Aorta (tissue), 5 donors: ENCODE measurements at regions of chr4 and their contacts with region 1.

Region 1: DNA sequence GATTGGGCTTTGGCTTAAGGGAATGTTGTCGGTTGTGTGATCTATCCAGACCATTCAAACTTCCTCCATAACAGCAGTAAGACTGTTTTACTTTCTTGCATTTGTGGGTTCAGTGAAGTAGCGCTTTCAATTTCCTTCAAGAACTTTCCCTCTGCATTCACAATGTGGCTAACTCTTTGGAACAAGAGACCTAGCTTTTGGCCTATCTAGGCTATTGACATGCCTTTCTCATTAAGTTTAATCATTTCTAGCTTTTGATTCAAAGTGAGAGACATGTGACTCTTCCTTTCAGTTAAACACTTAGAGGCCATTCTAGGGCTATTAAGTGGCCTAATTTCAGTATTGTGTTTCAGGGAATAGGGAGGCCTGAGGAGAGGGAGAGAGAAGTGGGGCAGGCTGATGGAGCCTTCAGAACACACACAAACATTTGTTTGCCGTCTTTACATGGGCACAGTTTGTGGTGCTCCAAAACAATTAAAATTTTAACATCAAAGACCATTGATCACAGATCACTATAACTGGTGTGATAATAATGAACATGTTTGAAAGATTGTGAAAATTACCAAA is 34.1 kb downstream of the ADH5 start:
- DNase-seq: no peak
- ATAC-seq: no peak
- H3K4me3 ChIP-seq: no peak overlapping the region
- H3K27ac ChIP-seq: no peak overlapping the region
- H3K4me1 ChIP-seq: no peaks in the 10 kb centered on the region
- H3K27me3 ChIP-seq: no peaks in the 10 kb centered on the region

Region 2: GRCh38 chr4:98467627-98468072 is 586.9 kb before region 1 on chr4:
- intact Hi-C with region 1: loop called (anchors 2 to 10 kb)
- DNase-seq: peak in 1 of 2 donors; percentile 81
- ATAC-seq: peak; percentile 90
- H3K4me3 ChIP-seq: no peak overlapping the region
- H3K27ac ChIP-seq: no peak overlapping the region
- H3K4me1 ChIP-seq: no peaks in the 10 kb centered on the region
- H3K27me3 ChIP-seq: peaks cover 0 to 2% of the 10 kb centered on the region in 2 donors

Region 3: GRCh38 chr4:98745366-98745765 is 309.1 kb before region 1 on chr4:
- intact Hi-C with region 1: loop called in 1 of 2 experiments (anchors 10 kb)
- DNase-seq: no peak
- ATAC-seq: no peak
- H3K4me3 ChIP-seq: no peak overlapping the region
- H3K27ac ChIP-seq: no peak overlapping the region
- H3K4me1 ChIP-seq: no peaks in the 10 kb centered on the region
- H3K27me3 ChIP-seq: no peaks in the 10 kb centered on the region

Region 4: GRCh38 chr4:98928505-98929340 is 125.8 kb before region 1 on chr4 and contains the start of gene EIF4E:
- intact Hi-C with region 1: loop called in 1 of 2 experiments (anchors 5 kb)
- DNase-seq: peak; percentile 98 to 99
- ATAC-seq: peak; percentile 98
- H3K4me3 ChIP-seq: peak within 1 kb of the TSS; percentile 72 to 84
- H3K27ac ChIP-seq: peak within 1 kb of the TSS; percentile 34 to 97
- H3K4me1 ChIP-seq: no peaks in the 10 kb centered on the region
- H3K27me3 ChIP-seq: no peaks in the 10 kb centered on the region
- total RNA-seq, gene EIF4E: 60.3 to 72.8 TPM

Region 5: GRCh38 chr4:98939892-98940298 is 114.6 kb before region 1 on chr4:
- intact Hi-C with region 1: loop called in 1 of 2 experiments (anchors 5 kb)
- DNase-seq: no peak
- ATAC-seq: peak; percentile 67
- H3K4me3 ChIP-seq: no peak overlapping the region
- H3K27ac ChIP-seq: no peak overlapping the region
- H3K4me1 ChIP-seq: no peaks in the 10 kb centered on the region
- H3K27me3 ChIP-seq: no peaks in the 10 kb centered on the region

Region 6: DNA sequence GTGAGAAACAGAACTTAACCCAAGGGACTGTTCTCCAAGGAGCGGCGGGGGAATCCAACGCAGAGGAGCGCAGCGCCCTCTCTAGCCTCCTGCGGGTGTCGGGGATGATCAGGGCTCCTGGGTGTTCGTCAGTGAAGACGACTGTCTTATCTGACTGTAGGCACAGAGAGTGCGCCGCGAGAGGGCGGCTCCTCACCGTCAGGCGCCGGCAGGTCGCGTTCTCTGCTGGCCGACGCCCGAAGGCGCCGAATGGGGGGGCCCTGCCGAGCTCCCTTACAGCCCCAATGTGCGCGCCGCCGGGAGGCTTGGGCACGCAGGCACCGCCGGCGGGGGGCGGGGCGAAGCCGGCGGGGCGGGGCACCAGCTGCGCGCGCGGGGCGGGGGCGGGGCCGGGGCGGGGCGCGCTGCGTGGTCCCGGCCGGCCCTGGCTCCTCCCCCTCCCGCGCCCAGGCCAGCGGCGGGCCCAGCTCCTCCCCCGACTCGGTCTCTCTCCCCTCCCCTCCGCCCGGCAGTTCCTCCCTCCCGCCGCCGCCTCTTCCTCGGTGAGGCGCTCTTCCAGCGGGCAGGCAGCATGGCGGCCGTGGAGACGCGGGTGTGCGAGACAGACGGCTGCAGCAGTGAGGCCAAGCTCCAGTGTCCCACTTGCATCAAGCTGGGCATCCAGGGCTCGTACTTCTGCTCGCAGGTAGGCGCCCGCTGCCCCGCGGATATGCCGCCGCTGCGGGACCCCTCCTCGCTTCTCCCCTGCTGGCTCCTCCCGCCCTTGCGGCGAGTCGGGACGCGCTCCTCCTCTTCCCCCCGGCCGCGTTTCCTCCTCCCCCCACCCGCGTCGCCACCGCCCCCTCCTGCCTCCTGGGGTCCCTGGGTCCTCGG is 59.1 kb before region 1 on chr4 and contains the start of gene METAP1:
- intact Hi-C with region 1: loop called (anchors 5 kb)
- DNase-seq: peak; percentile 95 to 96
- ATAC-seq: peak; percentile 98
- H3K4me3 ChIP-seq: peak within 1 kb of the TSS; percentile 97 to 99
- H3K27ac ChIP-seq: peak within 1 kb of the TSS; percentile 76 to 81
- H3K4me1 ChIP-seq: no peaks in the 10 kb centered on the region
- H3K27me3 ChIP-seq: no peaks in the 10 kb centered on the region
- total RNA-seq, gene METAP1: 57.2 to 61.4 TPM

Region 7: DNA sequence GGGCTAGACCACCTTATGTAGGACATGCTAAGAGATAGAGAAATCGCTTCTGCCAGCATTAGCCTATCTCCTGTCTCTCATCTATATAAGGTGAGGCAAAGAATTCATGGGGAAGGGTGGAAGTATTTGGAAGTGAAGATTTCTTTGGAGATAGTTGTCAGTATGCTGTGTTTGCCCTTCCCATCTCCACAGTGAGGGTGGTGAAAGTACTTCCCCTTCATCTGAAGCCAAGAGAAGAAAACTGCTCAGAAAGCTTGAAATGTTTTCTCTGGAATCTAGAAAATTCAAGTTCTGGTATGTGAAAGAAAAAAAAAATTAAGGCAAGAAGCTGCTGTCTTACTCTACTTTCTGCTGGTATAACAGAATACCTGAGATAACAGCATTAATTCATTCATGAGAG is 46.4 kb after region 1 on chr4:
- intact Hi-C with region 1: no loop called
- DNase-seq: no peak
- ATAC-seq: no peak
- H3K4me3 ChIP-seq: no peak overlapping the region
- H3K27ac ChIP-seq: no peak overlapping the region
- H3K4me1 ChIP-seq: peaks cover 0 to 3% of the 10 kb centered on the region in 2 donors
- H3K27me3 ChIP-seq: no peaks in the 10 kb centered on the region